PC-9 (cell line): ENCODE measurements at regions of chr3 and their contacts with region 1.

Region 1: DNA sequence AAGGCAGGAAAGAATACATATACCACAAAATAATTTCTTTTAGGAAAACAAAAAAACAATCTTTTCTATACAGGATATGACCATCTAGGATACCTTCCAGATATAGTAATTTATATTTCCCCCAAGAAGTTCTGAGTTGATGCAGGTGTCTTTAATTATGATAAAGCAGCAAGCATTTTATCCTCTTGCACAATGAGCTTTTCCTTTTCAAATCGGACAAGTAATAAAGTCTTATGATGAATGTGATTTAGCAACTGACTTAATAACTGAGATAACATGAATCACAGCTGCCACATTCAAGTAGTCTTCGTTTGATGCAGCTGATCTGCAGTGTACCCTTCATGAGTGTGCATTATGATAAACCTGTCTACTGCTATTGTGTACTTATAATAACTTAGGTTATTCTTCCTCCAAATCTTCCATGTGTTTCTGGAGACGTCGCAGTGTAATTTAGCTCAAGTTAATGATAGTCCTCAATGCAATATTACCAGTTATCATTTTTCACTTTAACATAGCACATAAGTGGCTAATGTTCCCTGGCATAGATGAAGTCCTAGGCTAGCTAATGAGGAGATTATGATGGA is 260.3 kb upstream of the MRPL3 start:
- DNase-seq: no peak
- H3K4me3 ChIP-seq: no peak overlapping the region
- H3K27ac ChIP-seq: no peak overlapping the region
- H3K4me1 ChIP-seq: no peaks in the 10 kb centered on the region
- H3K27me3 ChIP-seq: no peaks in the 10 kb centered on the region
- CTCF ChIP-seq: no peak

Region 2: DNA sequence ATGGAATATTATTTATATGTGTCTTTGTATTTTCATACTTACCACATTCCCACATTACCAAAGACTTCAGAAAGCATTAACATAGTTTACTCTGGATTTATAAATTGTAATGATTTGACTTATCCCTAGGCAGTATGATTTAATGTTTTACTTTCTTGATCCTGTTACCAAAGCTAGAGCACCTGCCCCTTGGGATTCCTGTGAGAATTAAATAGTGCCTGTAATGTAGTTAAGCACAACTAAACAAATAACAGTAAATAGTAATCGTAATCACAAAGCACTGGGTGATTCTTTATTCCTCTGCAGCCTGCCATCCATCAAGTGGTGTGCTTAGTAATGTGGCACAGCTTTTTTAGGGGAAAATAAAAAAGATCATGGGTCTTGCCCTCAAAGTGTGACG is 830.1 kb before region 1 on chr3:
- CTCF ChIA-PET with region 1: interaction called, 10 read pairs
- POLR2A ChIA-PET with region 1: no interaction called
- intact Hi-C with region 1: no loop called
- DNase-seq: no peak
- H3K4me3 ChIP-seq: no peak overlapping the region
- H3K27ac ChIP-seq: no peak overlapping the region
- H3K4me1 ChIP-seq: no peaks in the 10 kb centered on the region
- H3K27me3 ChIP-seq: no peaks in the 10 kb centered on the region
- CTCF ChIP-seq: no peak